ENCODE measurements at regions of chr3 and their contacts with region 1.

Region 1: DNA sequence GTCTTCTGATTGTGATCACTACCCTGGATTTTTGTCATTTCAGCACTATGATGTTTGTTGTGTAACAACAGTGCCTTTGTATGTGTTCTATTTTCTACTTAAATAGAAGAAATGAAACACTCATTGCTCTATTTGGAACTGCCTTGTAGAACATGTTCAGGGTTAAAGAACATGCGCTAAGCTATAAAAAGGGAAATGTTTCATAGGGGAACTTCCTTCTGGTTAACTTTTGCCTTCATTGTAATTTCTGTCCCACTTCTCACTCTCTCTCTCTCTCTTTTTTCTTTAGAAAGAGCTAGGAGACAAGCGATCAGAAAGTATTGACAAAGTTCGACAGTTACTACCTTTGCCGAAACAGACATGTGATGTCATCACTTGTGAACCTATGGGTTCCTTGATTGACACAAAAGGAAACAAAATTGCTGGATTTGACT is at the start of gene P2RY12:
- DNase-seq: peak; percentile 62
- ATAC-seq: peak; percentile 24
- H3K4me3 ChIP-seq: peak within 1 kb of the TSS in 4 of 5 experiments; percentile 18 to 53 (median 35)
- H3K4me3 Mint-ChIP-seq: peak within 1 kb of the TSS; percentile 81
- H3K27ac ChIP-seq: peak within 1 kb of the TSS; percentile 59 to 87
- H3K27ac Mint-ChIP-seq: peak within 1 kb of the TSS; percentile 85
- H3K4me1 ChIP-seq: peaks cover 55 to 63% of the 10 kb centered on the region in 2 donors
- H3K4me1 Mint-ChIP-seq: peaks cover 64% of the 10 kb centered on the region
- H3K27me3 ChIP-seq: no peaks in the 10 kb centered on the region
- H3K27me3 Mint-ChIP-seq: no peaks in the 10 kb centered on the region
- CTCF ChIP-seq: no peak
- total RNA-seq, gene P2RY12: 0.73 and 0.79 TPM in 2 replicates

Region 2: GRCh38 chr3:151276687-151277042 is 108.1 kb before region 1 on chr3:
- CTCF ChIA-PET with region 1: interaction called, 4 read pairs
- POLR2A ChIA-PET with region 1: no interaction called
- intact Hi-C with region 1: loop called (anchors 5 kb)
- DNase-seq: peak; percentile 89
- ATAC-seq: peak; percentile 70
- H3K4me3 ChIP-seq: peak overlapping the region in 4 of 5 experiments; percentile 19 to 57 (median 48)
- H3K4me3 Mint-ChIP-seq: peak overlapping the region; percentile 82
- H3K27ac ChIP-seq: peak overlapping the region; percentile 91 to 96
- H3K27ac Mint-ChIP-seq: peak overlapping the region; percentile 98
- H3K4me1 ChIP-seq: peaks cover 69 to 76% of the 10 kb centered on the region in 2 donors
- H3K4me1 Mint-ChIP-seq: peaks cover 78% of the 10 kb centered on the region
- H3K27me3 ChIP-seq: no peaks in the 10 kb centered on the region
- H3K27me3 Mint-ChIP-seq: no peaks in the 10 kb centered on the region
- CTCF ChIP-seq: no peak

Region 3: DNA sequence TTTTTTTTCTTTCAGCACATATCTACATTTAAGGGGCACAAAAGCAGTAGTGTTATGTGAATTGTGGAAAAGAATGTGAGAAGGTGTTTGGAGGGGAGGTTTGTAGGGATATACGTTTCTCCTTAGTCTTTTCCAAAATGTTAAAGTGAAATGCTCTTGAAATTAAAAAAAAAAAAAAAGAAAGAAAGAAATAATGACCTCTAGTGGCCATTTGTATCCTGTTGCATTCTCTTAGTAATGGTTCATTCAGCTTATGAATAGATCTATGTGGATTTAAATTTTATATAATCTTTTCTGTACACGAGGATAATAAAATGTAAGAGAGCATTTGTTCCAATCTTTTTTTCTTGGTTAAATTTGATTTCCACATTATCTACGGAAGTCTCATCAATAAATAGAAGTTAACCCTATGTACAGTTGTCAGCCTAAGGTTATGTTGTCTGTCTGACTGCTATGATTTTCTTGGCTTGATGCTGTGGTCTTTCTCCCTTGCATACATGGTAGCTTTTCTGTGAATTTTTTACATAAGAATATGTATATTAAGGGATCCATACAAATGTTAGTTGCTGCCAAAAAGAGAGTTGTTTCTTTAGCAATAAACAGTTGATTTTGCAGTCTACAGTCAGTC is 57.1 kb before region 1 on chr3:
- CTCF ChIA-PET with region 1: interaction called, 10 read pairs
- POLR2A ChIA-PET with region 1: interaction called, 3 read pairs
- intact Hi-C with region 1: loop called (anchors 2 kb)
- DNase-seq: peak; percentile 33
- ATAC-seq: no peak
- H3K4me3 ChIP-seq: peak overlapping the region in 1 of 5 experiments; percentile 82
- H3K4me3 Mint-ChIP-seq: no peak overlapping the region
- H3K27ac ChIP-seq: no peak overlapping the region
- H3K27ac Mint-ChIP-seq: peak overlapping the region; percentile 75
- H3K4me1 ChIP-seq: peaks cover 7 to 8% of the 10 kb centered on the region in 2 donors
- H3K4me1 Mint-ChIP-seq: peaks cover 26% of the 10 kb centered on the region
- H3K27me3 ChIP-seq: no peaks in the 10 kb centered on the region
- H3K27me3 Mint-ChIP-seq: no peaks in the 10 kb centered on the region
- CTCF ChIP-seq: peak; percentile 81

Region 4: GRCh38 chr3:151350656-151351618 is 33.8 kb before region 1 on chr3:
- CTCF ChIA-PET with region 1: no interaction called
- POLR2A ChIA-PET with region 1: no interaction called
- intact Hi-C with region 1: loop called (anchors 5 kb)
- DNase-seq: peak; percentile 30
- ATAC-seq: peak; percentile 54
- H3K4me3 ChIP-seq: peak overlapping the region in 1 of 5 experiments; percentile 34
- H3K4me3 Mint-ChIP-seq: peak overlapping the region; percentile 59
- H3K27ac ChIP-seq: no peak overlapping the region
- H3K27ac Mint-ChIP-seq: peak overlapping the region; percentile 78
- H3K4me1 ChIP-seq: peaks cover 15 to 16% of the 10 kb centered on the region in 2 donors
- H3K4me1 Mint-ChIP-seq: peaks cover 37% of the 10 kb centered on the region
- H3K27me3 ChIP-seq: no peaks in the 10 kb centered on the region
- H3K27me3 Mint-ChIP-seq: no peaks in the 10 kb centered on the region
- CTCF ChIP-seq: no peak

Region 5: GRCh38 chr3:152402695-152403451 is 1018.1 kb after region 1 on chr3:
- CTCF ChIA-PET with region 1: no interaction called
- POLR2A ChIA-PET with region 1: no interaction called
- intact Hi-C with region 1: loop called (anchors 5 kb)
- DNase-seq: no peak
- ATAC-seq: no peak
- H3K4me3 ChIP-seq: no peak overlapping the region
- H3K4me3 Mint-ChIP-seq: no peak overlapping the region
- H3K27ac ChIP-seq: peak overlapping the region in 1 of 2 donors; percentile 74
- H3K27ac Mint-ChIP-seq: peak overlapping the region; percentile 56
- H3K4me1 ChIP-seq: peaks cover 11 to 50% of the 10 kb centered on the region in 2 donors
- H3K4me1 Mint-ChIP-seq: peaks cover 73% of the 10 kb centered on the region
- H3K27me3 ChIP-seq: no peaks in the 10 kb centered on the region
- H3K27me3 Mint-ChIP-seq: no peaks in the 10 kb centered on the region
- CTCF ChIP-seq: no peak